ENCODE measurements at regions of chr6 and their contacts with region 1.

Region 1: GRCh38 chr6:136792410-136793262 is at the start of gene MAP3K5:
- H3K4me3 ChIP-seq: peak within 1 kb of the TSS; percentile 54
- H3K27ac ChIP-seq: peak within 1 kb of the TSS; percentile 89
- H3K4me1 ChIP-seq: peaks cover 13% of the 10 kb centered on the region
- CTCF ChIP-seq: peak; percentile 96

Region 2: DNA sequence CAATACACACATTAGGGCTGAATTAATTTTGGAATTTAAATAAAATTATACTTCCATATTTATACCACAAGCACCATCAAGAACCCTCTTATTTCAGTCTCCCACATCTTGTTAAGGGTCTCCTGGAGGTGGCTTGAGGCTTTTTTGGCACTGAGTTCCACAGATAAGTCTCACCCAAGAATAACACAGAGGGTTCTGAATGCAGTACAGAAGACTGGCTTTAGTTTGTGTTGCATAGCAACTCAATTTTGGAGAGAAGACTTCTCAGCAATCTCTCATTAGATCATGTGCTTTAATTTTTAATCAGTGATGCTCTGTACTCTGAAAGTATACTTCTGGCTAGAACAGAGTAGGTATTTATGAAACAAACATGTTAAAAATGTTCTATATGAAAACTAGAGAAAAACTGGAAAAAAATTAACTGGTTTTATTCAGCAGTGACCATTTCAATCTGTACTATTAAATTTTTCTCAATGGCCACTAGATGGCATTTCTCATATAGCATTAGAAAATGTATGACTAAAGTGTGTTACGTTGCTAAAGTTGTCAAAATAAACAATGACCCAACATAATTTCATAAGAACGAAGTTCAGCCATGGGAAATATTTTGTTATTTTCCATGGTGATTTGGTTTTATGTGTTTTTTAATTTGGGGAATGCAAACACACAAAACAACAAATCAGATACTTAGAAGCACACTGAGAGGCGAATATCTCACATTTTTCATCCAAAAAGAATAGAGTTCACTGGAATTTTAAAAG is 209.7 kb before region 1 on chr6:
- CTCF ChIA-PET with region 1: interaction called, 17 read pairs
- POLR2A ChIA-PET with region 1: no interaction called
- H3K4me3 ChIP-seq: no peak overlapping the region
- H3K27ac ChIP-seq: no peak overlapping the region
- H3K4me1 ChIP-seq: no peaks in the 10 kb centered on the region
- CTCF ChIP-seq: no peak

Region 3: DNA sequence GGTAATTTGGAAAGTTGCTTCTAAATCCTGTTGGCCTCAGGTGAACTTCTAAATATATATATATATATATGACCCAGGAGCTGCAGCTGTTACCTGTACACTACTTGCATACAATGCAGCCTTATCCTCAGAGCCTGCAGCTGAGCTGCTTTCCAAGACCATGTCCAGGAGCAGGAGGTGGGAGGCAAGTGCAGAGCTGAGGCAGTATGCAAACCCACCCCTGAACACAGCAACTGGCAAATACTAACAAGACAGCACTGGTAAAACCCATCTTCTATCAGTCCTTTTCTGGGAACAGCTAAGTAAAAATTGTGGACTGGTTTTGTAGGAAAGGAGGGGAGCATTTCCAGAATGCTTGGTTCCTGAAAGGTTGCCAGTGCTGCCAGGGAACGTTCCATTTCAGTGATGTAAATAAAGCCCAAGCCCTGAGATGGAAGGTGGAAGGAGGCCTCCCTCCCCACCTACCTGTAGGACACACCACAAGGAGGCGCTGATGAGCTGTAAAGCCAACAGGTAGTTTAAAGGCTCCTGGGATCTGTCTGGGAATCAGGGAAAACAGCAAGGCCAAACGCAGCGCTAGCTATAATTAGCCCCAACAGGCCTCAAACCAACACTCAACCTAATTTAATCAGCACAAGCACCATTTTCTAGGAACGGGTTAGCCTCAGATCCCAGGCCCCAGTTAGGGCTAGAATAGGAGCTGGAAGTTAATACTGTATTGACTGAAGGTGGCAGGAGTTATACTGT is 148.6 kb before region 1 on chr6:
- CTCF ChIA-PET with region 1: interaction called, 366 read pairs
- POLR2A ChIA-PET with region 1: interaction called, 85 read pairs
- H3K4me3 ChIP-seq: no peak overlapping the region
- H3K27ac ChIP-seq: no peak overlapping the region
- H3K4me1 ChIP-seq: no peaks in the 10 kb centered on the region
- CTCF ChIP-seq: peak; percentile 71

Region 4: GRCh38 chr6:136719280-136720044 is 73.2 kb before region 1 on chr6:
- CTCF ChIA-PET with region 1: interaction called, 10 read pairs
- POLR2A ChIA-PET with region 1: no interaction called
- H3K4me3 ChIP-seq: no peak overlapping the region
- H3K27ac ChIP-seq: no peak overlapping the region
- H3K4me1 ChIP-seq: peaks cover 5% of the 10 kb centered on the region; the same call in 1 of the 2 replicates
- CTCF ChIP-seq: no peak

Region 5: GRCh38 chr6:136772685-136773472 is 19.8 kb before region 1 on chr6:
- CTCF ChIA-PET with region 1: interaction called, 29 read pairs
- POLR2A ChIA-PET with region 1: interaction called, 13 read pairs
- H3K4me3 ChIP-seq: no peak overlapping the region
- H3K27ac ChIP-seq: no peak overlapping the region
- H3K4me1 ChIP-seq: peaks cover 13% of the 10 kb centered on the region; the same call in 1 of the 2 replicates
- CTCF ChIP-seq: no peak

Region 6: GRCh38 chr6:136822376-136823127 is 29.9 kb after region 1 on chr6 and contains the start of gene PEX7:
- CTCF ChIA-PET with region 1: interaction called, 6 read pairs
- POLR2A ChIA-PET with region 1: interaction called, 14 read pairs
- H3K4me3 ChIP-seq: peak within 1 kb of the TSS; percentile 74
- H3K27ac ChIP-seq: peak within 1 kb of the TSS; percentile 80
- H3K4me1 ChIP-seq: no peaks in the 10 kb centered on the region
- CTCF ChIP-seq: peak; percentile 81

Measured in HEK293 (cell line).